HAP-1 (cell line): ENCODE measurements at regions of chr22 and their contacts with region 1.

Region 1: GRCh38 chr22:36506637-36507517 is at the start of gene FOXRED2:
- DNase-seq: peak; percentile 77 to 91
- H3K4me3 ChIP-seq: peak within 1 kb of the TSS; percentile 40
- H3K4me1 ChIP-seq: peaks cover 20% of the 10 kb centered on the region
- H3K27me3 ChIP-seq: no peaks in the 10 kb centered on the region

Region 2: GRCh38 chr22:38490915-38491314 is 1984.0 kb after region 1 on chr22:
- in situ Hi-C with region 1: loop called (anchors 25 kb)
- DNase-seq: no peak
- H3K4me3 ChIP-seq: no peak overlapping the region
- H3K4me1 ChIP-seq: no peaks in the 10 kb centered on the region
- H3K27me3 ChIP-seq: no peaks in the 10 kb centered on the region